Posterior cingulate gyrus (tissue), 11 donors: ENCODE measurements at regions of chr9 and their contacts with region 1.

Region 1: GRCh38 chr9:120692901-120693699 is 21.2 kb downstream of the MEGF9 start:
- DNase-seq: no peak

Region 2: GRCh38 chr9:120642129-120642770 is 50.9 kb before region 1 on chr9:
- intact Hi-C with region 1: loop called (anchors 10 kb)
- DNase-seq: no peak